AG04449 (cell line): ENCODE measurements at regions of chr1 and their contacts with region 1.

Region 1: DNA sequence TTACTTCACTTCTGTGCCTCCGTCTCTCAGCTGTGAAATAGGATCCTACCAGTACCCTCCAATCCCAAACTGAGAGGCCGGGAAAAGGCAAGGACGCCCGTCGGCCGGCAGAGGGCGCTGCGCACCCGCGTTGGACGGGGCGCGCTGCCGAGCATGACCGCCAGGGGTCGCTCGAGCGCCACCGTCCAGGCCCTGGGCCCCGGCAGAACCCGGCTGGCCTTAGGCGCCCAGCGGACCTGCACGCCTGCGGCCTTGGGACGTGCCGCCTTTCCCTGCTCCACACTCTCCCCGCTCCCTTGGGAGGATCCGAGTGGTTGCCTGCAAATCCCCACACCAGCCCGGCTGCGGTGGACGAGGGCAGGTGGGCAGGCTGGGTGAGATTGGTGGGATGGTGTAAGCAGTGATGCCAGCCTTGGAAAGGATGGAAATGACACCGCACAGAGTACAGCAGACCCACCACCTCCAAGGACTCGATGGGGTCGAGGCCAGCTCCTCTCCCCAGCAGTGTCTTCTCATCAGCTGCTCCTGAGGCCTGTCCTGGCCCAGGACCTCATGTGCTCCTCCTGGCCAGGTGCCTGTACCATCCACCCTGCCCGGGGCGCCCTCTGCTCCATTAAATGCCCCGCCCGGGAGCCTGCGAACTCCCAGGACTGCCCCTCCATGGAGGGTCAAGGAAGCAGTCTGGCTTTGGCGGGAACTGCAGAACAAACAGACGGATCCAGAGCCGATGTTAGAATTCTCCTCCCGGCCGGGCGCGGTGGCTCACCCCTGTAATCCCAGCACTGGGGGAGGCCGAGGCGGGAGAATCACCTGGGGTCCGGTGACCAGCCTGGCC is 47.4 kb upstream of the LBR start:
- DNase-seq: no peak
- H3K4me3 ChIP-seq: no peak overlapping the region; the same call in 1 of the 2 replicates
- CTCF ChIP-seq: peak; percentile 100

Region 2: GRCh38 chr1:224996266-224996665 is 478.9 kb before region 1 on chr1:
- CTCF ChIA-PET with region 1: no interaction called
- POLR2A ChIA-PET with region 1: no interaction called
- DNase-seq: no peak
- H3K4me3 ChIP-seq: no peak overlapping the region
- CTCF ChIP-seq: no peak

Region 3: GRCh38 chr1:225290244-225290643 is 185.0 kb before region 1 on chr1:
- CTCF ChIA-PET with region 1: no interaction called
- POLR2A ChIA-PET with region 1: no interaction called
- DNase-seq: no peak
- H3K4me3 ChIP-seq: no peak overlapping the region
- CTCF ChIP-seq: no peak

Region 4: DNA sequence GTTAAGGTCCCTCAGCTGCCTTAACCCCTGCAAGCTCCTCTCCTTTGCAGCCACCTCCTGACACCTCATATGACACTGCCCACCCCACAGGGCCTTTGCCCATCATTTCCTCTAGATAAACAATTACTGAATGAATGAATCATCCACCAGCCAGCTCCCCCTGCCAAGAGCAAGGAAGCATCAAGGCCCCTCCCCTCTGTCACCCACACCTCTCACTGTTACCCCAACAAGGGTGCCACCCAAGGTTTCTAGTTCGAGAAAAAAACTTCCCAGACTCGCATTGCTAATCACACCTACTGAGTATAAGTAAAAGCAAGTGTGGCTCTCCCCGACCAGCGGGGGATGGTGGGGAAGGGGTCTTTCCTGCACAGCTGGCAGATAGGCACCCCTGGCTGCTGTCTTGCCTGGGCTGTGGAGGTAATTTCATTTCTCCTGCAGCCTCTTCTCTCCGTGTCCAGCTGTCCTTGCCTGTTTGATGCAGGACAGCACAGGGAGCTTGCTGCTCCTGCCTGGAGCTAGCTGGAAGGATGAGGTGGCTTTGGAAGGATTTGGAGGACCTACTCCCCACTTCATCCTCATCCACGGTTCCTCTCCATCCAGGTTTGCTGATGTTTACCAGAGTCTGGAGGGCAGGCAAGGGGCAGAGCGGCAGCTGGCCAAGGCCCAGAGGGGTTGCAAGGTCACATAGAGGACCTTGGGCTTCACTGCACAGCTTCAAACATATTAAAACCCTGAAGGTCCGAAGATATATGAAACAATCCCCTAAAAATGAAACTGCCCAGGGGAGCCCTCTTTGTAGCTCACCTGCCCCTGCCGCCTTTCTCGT is 14.3 kb before region 1 on chr1:
- CTCF ChIA-PET with region 1: interaction called, 39 read pairs
- POLR2A ChIA-PET with region 1: no interaction called
- DNase-seq: no peak
- H3K4me3 ChIP-seq: no peak overlapping the region
- CTCF ChIP-seq: no peak

Region 5: DNA sequence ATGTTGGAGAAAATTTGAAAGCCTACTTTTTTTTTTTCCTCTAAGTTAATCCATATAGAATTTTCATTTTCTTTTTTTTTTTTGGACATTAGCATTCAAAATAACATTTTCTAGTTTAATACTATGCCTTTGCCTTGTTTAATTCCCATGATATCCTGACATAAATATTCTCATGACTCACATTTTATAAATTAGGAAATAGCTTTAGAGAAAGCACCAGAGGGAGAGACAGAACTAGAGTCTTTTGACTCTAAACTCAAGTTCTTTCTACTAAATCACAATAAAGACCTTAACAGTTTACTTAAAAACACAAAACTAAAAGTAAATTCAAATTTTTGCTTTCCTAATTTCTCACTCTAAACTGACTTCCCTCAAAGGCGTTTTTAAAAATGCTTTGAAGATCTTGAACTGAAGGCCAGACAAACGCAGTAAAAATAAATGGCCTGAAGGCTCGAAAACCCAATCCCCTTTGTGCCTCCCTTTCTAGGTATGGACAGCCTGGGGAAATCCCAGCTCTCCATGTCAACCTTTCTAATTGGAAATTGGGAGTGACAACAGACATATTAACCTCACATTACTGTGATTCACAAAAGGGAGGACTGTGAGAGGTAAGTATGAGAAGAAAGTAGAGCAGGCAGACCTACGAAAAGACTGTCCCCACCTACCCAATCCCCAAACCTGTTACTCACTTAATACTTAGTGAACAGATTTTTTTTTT is 73.1 kb after region 1 on chr1:
- CTCF ChIA-PET with region 1: no interaction called
- POLR2A ChIA-PET with region 1: no interaction called
- DNase-seq: no peak
- H3K4me3 ChIP-seq: no peak overlapping the region
- CTCF ChIP-seq: no peak

Region 6: GRCh38 chr1:225595974-225596551 is 120.9 kb after region 1 on chr1:
- CTCF ChIA-PET with region 1: no interaction called
- POLR2A ChIA-PET with region 1: no interaction called
- DNase-seq: no peak
- H3K4me3 ChIP-seq: no peak overlapping the region
- CTCF ChIP-seq: no peak

Region 7: DNA sequence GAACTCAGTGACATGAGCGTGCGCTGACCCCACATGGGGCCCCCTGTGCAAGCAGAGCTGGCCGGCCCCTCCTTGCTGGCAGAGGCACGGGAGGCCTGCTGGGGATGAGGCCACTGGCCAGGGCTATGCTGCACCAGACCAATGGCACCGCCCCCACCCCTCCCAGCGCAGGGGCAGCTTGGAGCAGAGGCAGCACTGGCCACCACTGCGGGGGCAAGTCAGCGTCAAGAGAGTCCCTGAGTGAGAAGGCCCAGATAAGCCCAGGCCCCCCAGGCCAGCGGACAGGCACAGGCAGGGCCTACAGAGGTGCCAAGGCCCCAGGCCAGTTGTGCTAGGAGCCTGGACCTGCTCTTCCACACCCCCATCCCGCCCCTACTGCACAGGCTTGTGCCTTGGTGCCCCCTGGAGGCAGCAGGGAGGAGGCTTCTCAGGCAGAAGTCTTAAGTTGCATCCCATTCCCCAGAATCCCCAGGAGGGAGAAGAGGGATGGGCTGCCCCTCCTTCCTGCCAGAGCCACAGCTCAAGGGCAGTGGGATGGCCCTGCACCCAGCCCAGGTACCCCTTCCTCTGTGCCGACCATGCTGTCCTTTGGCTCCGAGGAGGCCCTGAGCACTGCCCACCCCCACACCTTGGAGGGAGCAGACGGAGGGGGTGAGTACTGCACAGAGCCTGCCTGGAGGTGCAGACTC is 370.5 kb after region 1 on chr1:
- CTCF ChIA-PET with region 1: interaction called, 105 read pairs
- POLR2A ChIA-PET with region 1: no interaction called
- DNase-seq: no peak
- H3K4me3 ChIP-seq: no peak overlapping the region
- CTCF ChIP-seq: peak; percentile 87

Region 8: DNA sequence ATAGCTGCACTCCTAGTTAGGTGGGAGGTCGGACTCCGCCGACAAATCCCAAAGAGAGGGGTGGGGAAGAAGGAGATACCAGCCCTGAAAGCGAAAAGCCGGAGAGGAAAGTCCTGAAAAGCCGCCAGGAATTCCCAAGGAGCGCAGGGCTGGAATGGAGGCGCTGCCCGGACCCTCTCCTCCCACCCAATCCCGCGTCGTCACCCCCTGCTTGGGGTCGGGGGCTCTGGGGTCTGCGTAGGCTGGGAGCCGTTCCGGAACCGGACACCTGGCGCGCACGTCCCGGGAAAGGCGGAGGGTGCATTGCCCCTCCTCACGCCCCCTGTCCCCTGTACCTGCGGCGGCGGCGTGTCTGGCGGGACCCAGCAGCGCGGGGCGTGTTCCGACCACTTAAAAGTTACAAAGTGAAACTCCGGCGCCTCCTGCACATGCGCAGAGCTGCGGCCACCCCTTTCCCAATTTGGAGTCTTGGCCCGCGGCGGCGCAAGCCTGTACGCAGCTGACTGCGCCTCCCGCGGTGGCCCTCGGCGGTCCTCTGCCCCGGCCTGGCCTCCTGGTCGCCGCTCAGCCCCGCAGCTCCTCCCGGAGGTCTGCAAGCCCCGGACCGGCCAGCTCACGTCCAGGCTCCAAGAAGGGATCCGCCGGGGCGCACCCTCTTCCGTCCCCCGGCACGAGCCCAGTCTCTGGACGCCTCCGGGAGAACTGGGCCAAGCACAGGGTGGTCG is 406.9 kb after region 1 on chr1 and contains the start of gene TMEM63A:
- CTCF ChIA-PET with region 1: interaction called, 26 read pairs
- POLR2A ChIA-PET with region 1: no interaction called
- DNase-seq: no peak
- H3K4me3 ChIP-seq: peak within 1 kb of the TSS; percentile 90
- CTCF ChIP-seq: peak; percentile 55

Region 9: GRCh38 chr1:225977937-225978748 is 502.9 kb after region 1 on chr1:
- CTCF ChIA-PET with region 1: interaction called, 164 read pairs
- POLR2A ChIA-PET with region 1: no interaction called
- DNase-seq: no peak
- H3K4me3 ChIP-seq: no peak overlapping the region
- CTCF ChIP-seq: no peak